ENCODE measurements at regions of chr12 and their contacts with region 1.

Region 1: DNA sequence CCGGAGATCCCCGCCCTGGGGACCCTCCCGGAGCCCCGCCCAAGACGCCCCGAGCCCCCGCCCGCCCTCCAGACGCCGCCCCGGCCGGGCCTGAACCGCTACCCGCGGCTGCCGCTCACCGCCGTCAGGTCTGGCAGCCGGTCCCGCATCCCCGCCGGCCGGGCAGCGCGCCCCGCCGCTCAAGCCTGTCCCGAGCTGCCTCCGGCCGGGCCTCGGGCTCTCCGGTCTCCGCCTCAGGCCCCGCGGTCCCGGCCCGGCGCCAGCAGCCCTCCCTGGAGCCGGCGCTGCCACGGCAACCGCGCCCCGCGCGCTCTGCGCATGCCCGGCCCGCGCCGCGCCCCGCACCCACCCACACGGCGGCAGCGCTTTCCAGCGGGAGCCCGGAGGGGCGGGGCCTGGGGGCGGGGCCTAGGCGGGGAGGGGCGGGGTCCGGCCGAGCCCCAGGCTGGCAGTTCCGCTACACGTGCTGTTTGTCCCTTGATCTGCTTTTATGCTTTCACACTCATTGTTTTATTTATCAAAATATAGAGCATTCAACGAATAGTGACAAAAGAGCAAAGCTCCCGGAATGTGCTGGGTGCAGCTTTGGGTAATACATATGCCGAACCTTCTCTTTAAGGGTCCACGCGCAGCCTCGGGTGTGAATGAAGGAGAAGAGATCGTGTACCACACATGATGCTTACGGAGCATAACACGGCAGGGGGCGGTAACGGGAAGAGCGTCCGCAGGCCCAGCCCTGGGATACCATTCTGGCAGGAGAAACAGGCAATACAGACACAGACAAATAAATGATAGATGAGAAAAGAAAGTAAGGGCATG is at the start of gene STX2:
- DNase-seq: peak; percentile 99
- H3K4me3 ChIP-seq: peak within 1 kb of the TSS; percentile 75 to 96
- H3K27ac ChIP-seq: peak within 1 kb of the TSS; percentile 53 to 74
- H3K4me1 ChIP-seq: peaks cover 0 to 13% of the 10 kb centered on the region in 2 experiments; a peak in 1 of 4 replicates
- H3K27me3 ChIP-seq: no peaks in the 10 kb centered on the region
- CTCF ChIP-seq: peak; percentile 51
- EP300 ChIP-seq: 0 out of 4 replicates have a peak, but pooled peaks of 1 of the 2 experiments have one; percentile 1
- RAD21 ChIP-seq: peak; percentile 44
- polyA plus RNA-seq, gene STX2: 25.1 and 31.7 TPM in 2 replicates

Region 2: DNA sequence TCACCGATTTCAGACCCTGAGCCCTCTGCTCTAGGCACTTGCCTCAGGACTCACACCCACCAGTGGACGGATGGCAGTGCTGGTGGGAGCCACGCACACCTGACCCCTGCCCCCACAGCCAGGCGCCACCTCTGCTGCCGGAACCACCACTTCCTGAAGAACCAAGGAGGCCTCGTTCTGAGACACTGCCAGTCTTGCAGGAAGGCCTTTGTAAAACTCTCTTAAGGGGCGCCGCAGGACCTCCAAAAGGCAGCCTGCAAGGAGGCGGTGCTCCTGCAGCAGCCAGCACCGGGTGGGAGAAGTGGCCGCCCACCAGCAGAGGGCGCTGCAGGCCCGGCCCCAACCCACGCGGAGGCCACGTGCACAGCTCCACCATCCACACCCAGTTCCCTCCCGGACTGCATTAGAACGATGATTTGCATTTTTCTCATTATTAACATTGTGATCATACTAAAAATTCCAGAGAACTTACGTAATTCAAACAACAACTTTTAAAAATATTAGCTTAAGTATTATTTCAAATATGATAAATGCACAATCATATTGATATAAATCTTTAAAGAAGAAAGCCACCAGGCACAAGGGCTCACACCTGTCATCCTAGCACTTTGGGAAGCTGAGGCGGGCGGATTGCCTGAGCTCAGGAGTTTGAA is 12.9 kb before region 1 on chr12:
- CTCF ChIA-PET with region 1: interaction called, 25 read pairs
- POLR2A ChIA-PET with region 1: interaction called, 5 read pairs
- DNase-seq: peak; percentile 85
- H3K4me3 ChIP-seq: peak overlapping the region in 1 of 2 experiments; percentile 29; a peak in 1 of 4 replicates
- H3K27ac ChIP-seq: no peak overlapping the region
- H3K4me1 ChIP-seq: peaks cover 0 to 13% of the 10 kb centered on the region in 2 experiments; a peak in 1 of 4 replicates
- H3K27me3 ChIP-seq: no peaks in the 10 kb centered on the region
- CTCF ChIP-seq: peak; percentile 74
- EP300 ChIP-seq: no peak
- RAD21 ChIP-seq: peak; percentile 50

Measured in SK-N-SH (cell line).